Activated CD8-positive, alpha-beta T cell treated with anti-CD3 and anti-CD28 coated beads for 36 hours (primary cell): ENCODE measurements at regions of chr19 and their contacts with region 1.

Region 1: GRCh38 chr19:15125232-15126067 is 18.2 kb downstream of the SYDE1 start:
- DNase-seq: peak; percentile 100
- ATAC-seq: peak; percentile 91
- H3K4me3 Mint-ChIP-seq: peak overlapping the region; percentile 94
- H3K27ac Mint-ChIP-seq: peak overlapping the region; percentile 99
- H3K4me1 Mint-ChIP-seq: peaks cover 23% of the 10 kb centered on the region
- H3K27me3 Mint-ChIP-seq: no peaks in the 10 kb centered on the region
- CTCF ChIP-seq: no peak

Region 2: DNA sequence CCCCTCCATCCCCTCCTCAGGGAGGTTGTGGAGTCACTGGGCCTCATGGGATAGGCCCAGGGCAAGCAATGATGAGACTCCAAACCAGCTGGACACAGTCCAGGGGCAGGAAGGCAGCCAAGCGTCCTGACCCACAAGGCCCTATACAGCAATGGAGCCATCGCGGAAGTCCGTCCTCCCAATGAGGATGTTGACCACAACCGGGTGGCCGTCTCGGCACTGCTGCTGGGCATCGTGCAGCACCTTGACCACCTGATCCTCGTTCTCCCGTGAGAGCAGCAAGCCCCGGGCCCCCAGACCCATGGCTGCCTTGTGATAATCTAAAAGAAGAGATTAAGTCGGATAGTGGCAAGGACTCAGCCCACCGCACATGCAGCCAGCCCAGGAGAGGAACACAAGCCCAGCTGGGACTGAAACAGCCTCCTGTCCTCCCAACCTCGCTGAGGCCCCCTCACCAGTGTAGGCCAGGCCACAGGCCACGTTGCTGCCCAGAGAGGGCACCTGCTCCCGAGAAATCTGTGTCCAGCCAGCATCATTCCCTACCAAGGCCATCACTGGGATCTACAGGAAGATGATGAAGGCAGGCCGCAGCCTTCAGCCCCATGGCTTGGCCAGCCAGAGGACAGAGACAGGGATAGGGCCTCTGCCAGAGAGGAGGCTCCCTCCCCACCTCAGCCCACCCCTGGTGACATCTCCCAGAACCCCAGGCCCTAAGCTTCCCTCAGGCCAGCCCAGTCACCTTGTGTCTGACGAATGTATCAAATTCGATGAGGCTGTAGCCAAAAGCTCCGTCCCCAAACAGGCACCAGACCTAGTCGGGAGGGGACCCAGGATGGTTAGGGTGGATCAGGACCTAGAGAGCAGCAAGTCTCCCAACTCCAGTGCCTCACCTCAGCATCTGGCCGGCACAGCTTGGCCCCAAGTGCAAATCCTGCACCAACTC is 10.1 kb before region 1 on chr19:
- CTCF ChIA-PET with region 1: interaction called, 8 read pairs
- POLR2A ChIA-PET with region 1: interaction called, 48 read pairs
- intact Hi-C with region 1: no loop called
- DNase-seq: no peak
- ATAC-seq: no peak
- H3K4me3 Mint-ChIP-seq: no peak overlapping the region
- H3K27ac Mint-ChIP-seq: no peak overlapping the region
- H3K4me1 Mint-ChIP-seq: no peaks in the 10 kb centered on the region
- H3K27me3 Mint-ChIP-seq: no peaks in the 10 kb centered on the region
- CTCF ChIP-seq: no peak